ENCODE measurements at regions of chr12 and their contacts with region 1.

Region 1: DNA sequence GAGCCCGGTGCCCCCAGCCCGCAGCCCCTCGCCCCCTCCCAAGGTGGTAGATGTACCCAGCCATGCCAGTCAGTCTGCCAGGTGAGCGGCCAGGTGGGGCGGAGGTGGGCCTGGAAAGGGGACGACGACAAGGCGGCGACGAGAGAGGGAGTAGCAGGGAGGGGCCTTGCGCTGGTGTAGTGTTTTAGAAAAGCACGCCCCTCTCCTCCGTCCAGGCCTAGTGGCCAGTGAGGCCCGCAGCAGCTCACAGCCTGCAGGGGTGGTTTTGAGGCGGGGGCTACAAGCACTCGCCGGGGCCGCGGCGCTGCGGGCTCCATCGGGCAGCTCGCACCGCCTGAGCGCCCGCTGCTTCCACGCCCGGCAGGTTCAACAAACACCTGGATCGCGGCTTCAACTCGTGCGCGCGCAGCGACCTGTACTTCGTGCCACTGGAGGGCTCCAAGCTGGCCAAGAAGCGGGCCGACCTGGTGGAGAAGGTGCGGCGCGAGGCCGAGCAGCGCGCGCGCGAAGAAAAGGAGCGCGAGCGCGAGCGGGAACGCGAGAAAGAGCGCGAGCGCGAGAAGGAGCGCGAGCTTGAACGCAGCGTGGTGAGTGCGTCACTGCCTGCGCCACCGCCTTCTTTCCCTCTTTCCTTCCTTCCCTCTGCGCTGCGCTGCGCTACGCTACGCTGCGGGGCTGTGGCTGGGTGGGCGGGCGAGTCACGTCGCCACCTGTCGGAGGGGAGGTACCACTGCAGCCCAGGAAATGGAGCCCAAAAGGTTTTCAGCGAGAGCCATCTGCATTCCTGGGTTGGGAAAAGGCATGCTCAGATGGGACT is 5.9 kb upstream of the RNU7-1 start:
- DNase-seq: peak; percentile 84 to 99 (median 92)
- ATAC-seq: peak; percentile 91
- H3K4me3 ChIP-seq: peak overlapping the region; percentile 60 to 91
- H3K4me3 Mint-ChIP-seq: peak overlapping the region; percentile 83
- H3K27ac ChIP-seq: peak overlapping the region; percentile 89 to 91
- H3K27ac Mint-ChIP-seq: peak overlapping the region; percentile 96
- H3K4me1 ChIP-seq: peaks cover 25% of the 10 kb centered on the region
- H3K4me1 Mint-ChIP-seq: peaks cover 48% of the 10 kb centered on the region
- H3K27me3 ChIP-seq: no peaks in the 10 kb centered on the region
- H3K27me3 Mint-ChIP-seq: no peaks in the 10 kb centered on the region
- CTCF ChIP-seq: peak; percentile 90

Region 2: DNA sequence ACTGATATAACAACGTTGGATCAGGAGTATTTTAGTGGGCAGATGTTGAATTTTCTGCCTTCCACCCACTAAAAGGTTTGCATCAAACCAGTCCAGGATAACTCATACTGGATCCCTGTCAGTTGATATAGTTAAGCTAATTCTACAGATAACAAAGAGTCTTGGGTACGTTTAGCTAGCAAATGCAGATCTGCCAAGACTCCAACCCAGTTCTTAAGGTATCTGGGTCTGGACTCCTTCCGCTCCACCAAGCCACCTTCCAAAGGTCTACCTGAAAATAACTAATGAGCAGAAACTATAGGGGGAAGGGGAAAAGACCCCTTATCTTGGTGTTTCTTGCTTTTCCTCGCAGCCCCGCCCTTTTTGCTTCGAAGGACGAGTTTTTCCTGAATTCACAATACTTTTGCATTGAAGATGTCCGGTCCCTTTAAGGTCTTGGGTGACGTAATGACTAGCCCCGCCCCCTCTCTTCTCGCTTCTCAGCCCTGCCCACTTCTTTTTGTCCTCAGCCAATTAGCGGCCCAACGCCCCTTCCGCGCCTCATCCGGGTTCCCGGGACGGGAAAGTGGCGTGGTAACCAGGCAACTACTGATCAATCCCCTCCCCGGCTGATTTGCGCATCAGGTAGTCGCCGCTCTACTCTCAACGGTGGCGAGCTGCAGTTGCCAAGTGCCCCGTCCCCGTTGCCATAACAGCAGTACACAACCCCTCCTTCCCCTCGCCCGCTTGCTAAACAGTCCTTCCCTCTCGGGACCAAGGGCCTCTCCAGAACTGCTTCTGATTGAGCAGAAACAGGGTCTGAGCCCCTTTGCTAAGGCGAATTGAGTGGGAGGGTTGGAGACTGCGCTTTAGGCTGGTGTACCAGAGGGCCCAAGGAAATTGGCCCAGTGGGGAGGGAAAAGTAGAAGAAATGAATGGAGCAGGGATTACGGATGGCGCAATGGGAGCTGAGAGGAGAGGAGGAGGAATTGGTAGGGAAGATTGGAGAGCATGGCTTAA is 33.1 kb before region 1 on chr12 and contains the start of gene LRRC23:
- CTCF ChIA-PET with region 1: interaction called, 7 read pairs
- POLR2A ChIA-PET with region 1: interaction called, 6 read pairs
- intact Hi-C with region 1: loop called in 1 of 2 experiments (anchors 2 kb)
- DNase-seq: peak; percentile 92 to 99 (median 97)
- ATAC-seq: peak; percentile 96
- H3K4me3 ChIP-seq: peak within 1 kb of the TSS; percentile 56 to 64
- H3K4me3 Mint-ChIP-seq: peak within 1 kb of the TSS; percentile 5
- H3K27ac ChIP-seq: peak within 1 kb of the TSS; percentile 86 to 88
- H3K27ac Mint-ChIP-seq: no peak within 1 kb of the TSS
- H3K4me1 ChIP-seq: peaks cover 15% of the 10 kb centered on the region
- H3K4me1 Mint-ChIP-seq: no peaks in the 10 kb centered on the region
- H3K27me3 ChIP-seq: no peaks in the 10 kb centered on the region
- H3K27me3 Mint-ChIP-seq: no peaks in the 10 kb centered on the region
- CTCF ChIP-seq: no peak
- total RNA-seq, gene LRRC23: 6.5 to 7.2 TPM

Region 3: DNA sequence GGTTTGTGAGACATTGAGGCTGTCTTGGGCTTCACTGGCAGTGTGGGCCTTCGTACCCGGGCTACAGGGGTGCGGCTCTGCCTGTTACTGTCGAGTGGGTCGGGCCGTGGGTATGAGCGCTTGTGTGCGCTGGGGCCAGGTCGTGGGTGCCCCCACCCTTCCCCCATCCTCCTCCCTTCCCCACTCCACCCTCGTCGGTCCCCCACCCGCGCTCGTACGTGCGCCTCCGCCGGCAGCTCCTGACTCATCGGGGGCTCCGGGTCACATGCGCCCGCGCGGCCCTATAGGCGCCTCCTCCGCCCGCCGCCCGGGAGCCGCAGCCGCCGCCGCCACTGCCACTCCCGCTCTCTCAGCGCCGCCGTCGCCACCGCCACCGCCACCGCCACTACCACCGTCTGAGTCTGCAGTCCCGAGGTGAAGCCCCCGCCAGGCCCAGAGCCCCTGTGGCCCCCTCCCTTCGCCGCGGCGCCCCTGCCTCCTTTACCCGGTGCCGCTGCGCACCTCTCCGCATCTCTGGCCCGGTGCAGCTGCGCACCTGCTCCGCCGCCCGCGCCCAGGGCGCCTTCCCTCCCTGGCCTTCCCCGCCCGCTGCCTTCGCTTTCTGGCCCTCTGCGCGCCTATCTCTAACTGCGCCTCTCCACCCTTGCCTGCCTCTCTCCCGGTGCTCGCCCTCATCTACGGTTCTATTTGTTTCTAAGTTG is 23.3 kb before region 1 on chr12 and contains the start of gene ENO2:
- CTCF ChIA-PET with region 1: interaction called, 9 read pairs
- POLR2A ChIA-PET with region 1: interaction called, 16 read pairs
- intact Hi-C with region 1: loop called in 1 of 2 experiments (anchors 1 kb)
- DNase-seq: peak; percentile 59 to 92 (median 89)
- ATAC-seq: peak; percentile 94
- H3K4me3 ChIP-seq: peak within 1 kb of the TSS; percentile 52 to 83
- H3K4me3 Mint-ChIP-seq: peak within 1 kb of the TSS; percentile 95
- H3K27ac ChIP-seq: peak within 1 kb of the TSS; percentile 77 to 88
- H3K27ac Mint-ChIP-seq: peak within 1 kb of the TSS; percentile 95
- H3K4me1 ChIP-seq: peaks cover 18% of the 10 kb centered on the region
- H3K4me1 Mint-ChIP-seq: peaks cover 31% of the 10 kb centered on the region
- H3K27me3 ChIP-seq: no peaks in the 10 kb centered on the region
- H3K27me3 Mint-ChIP-seq: no peaks in the 10 kb centered on the region
- CTCF ChIP-seq: no peak
- total RNA-seq, gene ENO2: 95.5 to 99.6 TPM

Region 4: GRCh38 chr12:6953442-6954315 is 16.0 kb after region 1 on chr12:
- CTCF ChIA-PET with region 1: interaction called, 531 read pairs
- POLR2A ChIA-PET with region 1: interaction called, 642 read pairs
- intact Hi-C with region 1: no loop called
- DNase-seq: peak in 8 of 9 experiments; percentile 69 to 91 (median 82)
- ATAC-seq: peak; percentile 27
- H3K4me3 ChIP-seq: peak overlapping the region; percentile 93 to 95
- H3K4me3 Mint-ChIP-seq: peak overlapping the region; percentile 99
- H3K27ac ChIP-seq: peak overlapping the region; percentile 72 to 93
- H3K27ac Mint-ChIP-seq: peak overlapping the region; percentile 100
- H3K4me1 ChIP-seq: peaks cover 70% of the 10 kb centered on the region
- H3K4me1 Mint-ChIP-seq: peaks cover 81% of the 10 kb centered on the region
- H3K27me3 ChIP-seq: no peaks in the 10 kb centered on the region
- H3K27me3 Mint-ChIP-seq: no peaks in the 10 kb centered on the region
- CTCF ChIP-seq: no peak

Measured in CD8-positive, alpha-beta T cell (primary cell).